Psoas muscle (tissue), 8 donors: ENCODE measurements at regions of chr1 and their contacts with region 1.

Region 1: GRCh38 chr1:179809506-179810366 is 66.6 kb downstream of the FAM163A start:
- DNase-seq: peak; percentile 47 to 66
- ATAC-seq: peak; percentile 67 to 77 (median 72)
- H3K4me3 ChIP-seq: no peak overlapping the region
- H3K27ac ChIP-seq: no peak overlapping the region
- H3K4me1 ChIP-seq: peaks cover 7% of the 10 kb centered on the region
- H3K27me3 ChIP-seq: peaks cover 0 to 9% (median 7%) of the 10 kb centered on the region in 3 donors
- CTCF ChIP-seq: peak; percentile 87

Region 2: GRCh38 chr1:179706339-179706941 is 103.3 kb before region 1 on chr1:
- intact Hi-C with region 1: loop called (anchors 1 to 2 kb)
- DNase-seq: peak in 1 of 2 donors; percentile 46
- ATAC-seq: no peak
- H3K4me3 ChIP-seq: no peak overlapping the region
- H3K27ac ChIP-seq: no peak overlapping the region
- H3K4me1 ChIP-seq: no peaks in the 10 kb centered on the region
- H3K27me3 ChIP-seq: no peaks in the 10 kb centered on the region
- CTCF ChIP-seq: peak; percentile 69